Naive thymus-derived CD4-positive, alpha-beta T cell (primary cell): ENCODE measurements at regions of chr3 and their contacts with region 1.

Region 1: GRCh38 chr3:161310649-161311423 is 60.5 kb downstream of the SPTSSB start:
- DNase-seq: peak in 8 of 9 donors; percentile 39 to 77 (median 66)
- ATAC-seq: peak; percentile 87
- H3K4me3 ChIP-seq: no peak overlapping the region
- H3K4me3 Mint-ChIP-seq: peak overlapping the region; percentile 40 to 75 (median 64)
- H3K27ac ChIP-seq: peak overlapping the region; percentile 25
- H3K27ac Mint-ChIP-seq: peak overlapping the region; percentile 33 to 85 (median 59)
- H3K4me1 ChIP-seq: peaks cover 43 to 50% of the 10 kb centered on the region in 2 donors
- H3K4me1 Mint-ChIP-seq: peaks cover 25 to 85% (median 67%) of the 10 kb centered on the region in 7 donors
- H3K27me3 ChIP-seq: no peaks in the 10 kb centered on the region
- H3K27me3 Mint-ChIP-seq: peaks cover 0 to 68% (median 0%) of the 10 kb centered on the region in 5 donors

Region 2: GRCh38 chr3:160754855-160755747 is 555.7 kb before region 1 on chr3:
- CTCF ChIA-PET with region 1: no interaction called
- POLR2A ChIA-PET with region 1: no interaction called
- intact Hi-C with region 1: loop called in 1 of 2 experiments (anchors 2 kb)
- DNase-seq: peak; percentile 76 to 88 (median 85)
- ATAC-seq: peak; percentile 92
- H3K4me3 ChIP-seq: peak overlapping the region; percentile 73
- H3K4me3 Mint-ChIP-seq: peak overlapping the region; percentile 88 to 99 (median 96)
- H3K27ac ChIP-seq: peak overlapping the region; percentile 69
- H3K27ac Mint-ChIP-seq: peak overlapping the region; percentile 88 to 97 (median 94)
- H3K4me1 ChIP-seq: peaks cover 10 to 11% of the 10 kb centered on the region in 2 donors
- H3K4me1 Mint-ChIP-seq: peaks cover 27 to 36% (median 30%) of the 10 kb centered on the region in 7 donors
- H3K27me3 ChIP-seq: peaks cover 0 to 6% of the 10 kb centered on the region in 2 donors
- H3K27me3 Mint-ChIP-seq: peaks cover 5 to 41% (median 10%) of the 10 kb centered on the region in 5 donors

Region 3: DNA sequence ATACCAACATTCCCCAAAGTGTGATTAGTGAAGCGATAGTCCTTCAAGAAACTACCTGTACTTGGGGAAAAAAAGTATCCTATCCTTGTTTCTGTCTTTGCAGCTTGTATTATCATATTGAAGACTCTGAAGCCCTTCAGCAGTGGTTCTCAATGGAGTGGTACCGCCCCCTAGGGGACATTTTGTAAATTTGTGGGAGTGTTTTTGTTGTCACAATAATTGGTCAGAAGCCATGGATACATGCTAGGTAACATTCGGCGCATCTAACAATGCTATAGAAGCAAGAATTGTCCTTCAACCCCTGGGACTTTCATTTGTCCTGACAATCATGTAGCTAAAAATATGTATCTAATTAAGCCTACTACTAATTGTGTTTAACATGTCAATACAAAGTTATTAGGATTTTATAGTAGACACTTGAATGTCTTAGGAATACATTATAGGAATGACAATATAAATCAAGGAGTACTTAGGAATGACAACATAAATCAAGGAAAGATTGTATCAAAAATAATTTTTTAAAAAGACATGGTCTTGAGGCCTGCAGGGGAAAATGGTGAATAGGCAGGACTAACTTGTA is 36.0 kb before region 1 on chr3:
- CTCF ChIA-PET with region 1: interaction called, 4 read pairs
- POLR2A ChIA-PET with region 1: no interaction called
- intact Hi-C with region 1: loop called in 1 of 2 experiments (anchors 2 kb)
- DNase-seq: peak in 8 of 9 donors; percentile 13 to 52 (median 34)
- ATAC-seq: peak; percentile 57
- H3K4me3 ChIP-seq: no peak overlapping the region
- H3K4me3 Mint-ChIP-seq: no peak overlapping the region
- H3K27ac ChIP-seq: no peak overlapping the region
- H3K27ac Mint-ChIP-seq: peak overlapping the region in 1 of 9 donors; percentile 59
- H3K4me1 ChIP-seq: no peaks in the 10 kb centered on the region
- H3K4me1 Mint-ChIP-seq: peaks cover 0 to 9% (median 3%) of the 10 kb centered on the region in 7 donors
- H3K27me3 ChIP-seq: no peaks in the 10 kb centered on the region
- H3K27me3 Mint-ChIP-seq: peaks cover 0 to 4% (median 0%) of the 10 kb centered on the region in 5 donors

Region 4: DNA sequence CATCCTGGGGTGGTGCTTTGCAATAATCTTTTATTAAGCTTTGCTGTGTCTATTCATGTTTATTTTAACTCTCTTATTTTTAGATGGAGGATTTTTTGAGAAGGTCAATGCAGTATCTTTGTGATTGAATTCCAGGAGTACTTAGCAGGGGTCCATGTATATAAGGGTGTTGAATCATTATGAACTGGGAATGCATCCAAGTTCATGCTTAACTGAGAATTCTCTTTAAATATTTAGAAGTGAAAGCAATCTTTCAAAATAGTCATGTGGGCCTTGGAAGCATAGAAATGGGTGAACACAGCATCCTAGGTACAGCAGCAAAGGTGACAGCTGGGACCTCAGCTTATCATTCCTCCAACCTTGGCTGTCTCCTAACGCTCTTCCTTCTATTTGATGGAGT is 33.1 kb after region 1 on chr3:
- CTCF ChIA-PET with region 1: no interaction called
- POLR2A ChIA-PET with region 1: no interaction called
- intact Hi-C with region 1: no loop called
- DNase-seq: no peak
- ATAC-seq: no peak
- H3K4me3 ChIP-seq: no peak overlapping the region
- H3K4me3 Mint-ChIP-seq: no peak overlapping the region
- H3K27ac ChIP-seq: no peak overlapping the region
- H3K27ac Mint-ChIP-seq: no peak overlapping the region
- H3K4me1 ChIP-seq: no peaks in the 10 kb centered on the region
- H3K4me1 Mint-ChIP-seq: peaks cover 2 to 6% (median 5%) of the 10 kb centered on the region in 7 donors
- H3K27me3 ChIP-seq: no peaks in the 10 kb centered on the region
- H3K27me3 Mint-ChIP-seq: peaks cover 0 to 61% (median 5%) of the 10 kb centered on the region in 5 donors

Region 5: GRCh38 chr3:161371430-161372326 is 60.8 kb after region 1 on chr3 and contains the start of gene SPTSSB:
- CTCF ChIA-PET with region 1: interaction called, 3 read pairs
- POLR2A ChIA-PET with region 1: interaction called, 3 read pairs
- intact Hi-C with region 1: loop called in 1 of 2 experiments (anchors 2 kb)
- DNase-seq: peak; percentile 21 to 57 (median 43)
- ATAC-seq: peak; percentile 75
- H3K4me3 ChIP-seq: peak within 1 kb of the TSS; percentile 68
- H3K4me3 Mint-ChIP-seq: peak within 1 kb of the TSS; percentile 79 to 93 (median 88)
- H3K27ac ChIP-seq: no peak within 1 kb of the TSS
- H3K27ac Mint-ChIP-seq: peak within 1 kb of the TSS in 3 of 9 donors; percentile 46 to 64 (median 57)
- H3K4me1 ChIP-seq: peaks cover 7% of the 10 kb centered on the region in 2 donors
- H3K4me1 Mint-ChIP-seq: peaks cover 7 to 21% (median 18%) of the 10 kb centered on the region in 7 donors
- H3K27me3 ChIP-seq: peaks cover 0 to 15% of the 10 kb centered on the region in 2 donors
- H3K27me3 Mint-ChIP-seq: peaks cover 6 to 84% (median 22%) of the 10 kb centered on the region in 5 donors
- total RNA-seq, gene SPTSSB: 0.34 to 1.6 TPM in 2 of 5 experiments, not detected in the others

Region 6: GRCh38 chr3:161395115-161396012 is 84.5 kb after region 1 on chr3:
- CTCF ChIA-PET with region 1: interaction called, 4 read pairs
- POLR2A ChIA-PET with region 1: interaction called, 3 read pairs
- intact Hi-C with region 1: loop called (anchors 1 to 5 kb)
- DNase-seq: peak in 7 of 9 donors; percentile 51 to 84 (median 76)
- ATAC-seq: peak; percentile 93
- H3K4me3 ChIP-seq: peak overlapping the region; percentile 10
- H3K4me3 Mint-ChIP-seq: peak overlapping the region; percentile 52 to 85 (median 66)
- H3K27ac ChIP-seq: no peak overlapping the region
- H3K27ac Mint-ChIP-seq: peak overlapping the region in 8 of 9 donors; percentile 1 to 71 (median 37)
- H3K4me1 ChIP-seq: peaks cover 23 to 38% of the 10 kb centered on the region in 2 donors
- H3K4me1 Mint-ChIP-seq: peaks cover 25 to 81% (median 69%) of the 10 kb centered on the region in 7 donors
- H3K27me3 ChIP-seq: peaks cover 0 to 4% of the 10 kb centered on the region in 2 donors
- H3K27me3 Mint-ChIP-seq: peaks cover 0 to 61% (median 6%) of the 10 kb centered on the region in 5 donors